Sigmoid colon (tissue), 7 donors: ENCODE measurements at regions of chr12 and their contacts with region 1.

Region 1: GRCh38 chr12:6778574-6779550 is 6.5 kb downstream of the LAG3 start:
- DNase-seq: peak; percentile 98
- H3K4me3 ChIP-seq: peak overlapping the region; percentile 12 to 50 (median 46)
- H3K27ac ChIP-seq: peak overlapping the region; percentile 84 to 89 (median 88)
- H3K4me1 ChIP-seq: peaks cover 0 to 28% (median 22%) of the 10 kb centered on the region in 4 donors
- H3K27me3 ChIP-seq: no peaks in the 10 kb centered on the region
- CTCF ChIP-seq: peak; percentile 93 to 99 (median 96)
- EP300 ChIP-seq: peak in 1 of 4 donors; percentile 47
- POLR2A ChIP-seq: no peak

Region 2: GRCh38 chr12:6613776-6614512 is 164.9 kb before region 1 on chr12:
- intact Hi-C with region 1: loop called (anchors 2 kb)
- DNase-seq: peak; percentile 98
- H3K4me3 ChIP-seq: peak overlapping the region in 1 of 4 donors; percentile 19
- H3K27ac ChIP-seq: peak overlapping the region; percentile 87 to 96 (median 94)
- H3K4me1 ChIP-seq: peaks cover 0 to 39% (median 36%) of the 10 kb centered on the region in 4 donors
- H3K27me3 ChIP-seq: no peaks in the 10 kb centered on the region
- CTCF ChIP-seq: no peak
- EP300 ChIP-seq: no peak
- POLR2A ChIP-seq: no peak

Region 3: GRCh38 chr12:6688999-6689882 is 89.6 kb before region 1 on chr12 and contains the start of gene ZNF384:
- intact Hi-C with region 1: loop called (anchors 5 kb)
- DNase-seq: peak; percentile 99
- H3K4me3 ChIP-seq: peak within 1 kb of the TSS; percentile 94 to 98 (median 96)
- H3K27ac ChIP-seq: peak within 1 kb of the TSS; percentile 98 to 100 (median 100)
- H3K4me1 ChIP-seq: peaks cover 0 to 40% (median 36%) of the 10 kb centered on the region in 4 donors
- H3K27me3 ChIP-seq: no peaks in the 10 kb centered on the region
- CTCF ChIP-seq: peak in 2 of 4 experiments; percentile 22 to 35
- EP300 ChIP-seq: peak in 2 of 4 donors; percentile 8 to 40
- POLR2A ChIP-seq: peak; percentile 30 to 47
- total RNA-seq, gene ZNF384: 24.0 to 32.6 (median 28.7) TPM

Region 4: GRCh38 chr12:6735448-6736191 is 43.2 kb before region 1 on chr12:
- intact Hi-C with region 1: loop called (anchors 1 kb)
- DNase-seq: peak; percentile 81
- H3K4me3 ChIP-seq: no peak overlapping the region
- H3K27ac ChIP-seq: peak overlapping the region; percentile 42 to 67 (median 60)
- H3K4me1 ChIP-seq: peaks cover 0 to 10% (median 5%) of the 10 kb centered on the region in 4 donors
- H3K27me3 ChIP-seq: no peaks in the 10 kb centered on the region
- CTCF ChIP-seq: peak; percentile 53 to 73 (median 71)
- EP300 ChIP-seq: no peak
- POLR2A ChIP-seq: no peak

Region 5: GRCh38 chr12:6752921-6753771 is 25.7 kb before region 1 on chr12 and contains the start of gene MLF2:
- intact Hi-C with region 1: loop called (anchors 1 kb)
- DNase-seq: peak; percentile 100
- H3K4me3 ChIP-seq: peak within 1 kb of the TSS; percentile 90 to 96 (median 91)
- H3K27ac ChIP-seq: peak within 1 kb of the TSS; percentile 98 to 99 (median 99)
- H3K4me1 ChIP-seq: peaks cover 0 to 24% (median 19%) of the 10 kb centered on the region in 4 donors
- H3K27me3 ChIP-seq: no peaks in the 10 kb centered on the region
- CTCF ChIP-seq: peak in 1 of 4 experiments; percentile 95
- EP300 ChIP-seq: peak in 1 of 4 donors; percentile 72
- POLR2A ChIP-seq: peak; percentile 96
- total RNA-seq, gene MLF2: 148 to 163 (median 159) TPM

Region 6: DNA sequence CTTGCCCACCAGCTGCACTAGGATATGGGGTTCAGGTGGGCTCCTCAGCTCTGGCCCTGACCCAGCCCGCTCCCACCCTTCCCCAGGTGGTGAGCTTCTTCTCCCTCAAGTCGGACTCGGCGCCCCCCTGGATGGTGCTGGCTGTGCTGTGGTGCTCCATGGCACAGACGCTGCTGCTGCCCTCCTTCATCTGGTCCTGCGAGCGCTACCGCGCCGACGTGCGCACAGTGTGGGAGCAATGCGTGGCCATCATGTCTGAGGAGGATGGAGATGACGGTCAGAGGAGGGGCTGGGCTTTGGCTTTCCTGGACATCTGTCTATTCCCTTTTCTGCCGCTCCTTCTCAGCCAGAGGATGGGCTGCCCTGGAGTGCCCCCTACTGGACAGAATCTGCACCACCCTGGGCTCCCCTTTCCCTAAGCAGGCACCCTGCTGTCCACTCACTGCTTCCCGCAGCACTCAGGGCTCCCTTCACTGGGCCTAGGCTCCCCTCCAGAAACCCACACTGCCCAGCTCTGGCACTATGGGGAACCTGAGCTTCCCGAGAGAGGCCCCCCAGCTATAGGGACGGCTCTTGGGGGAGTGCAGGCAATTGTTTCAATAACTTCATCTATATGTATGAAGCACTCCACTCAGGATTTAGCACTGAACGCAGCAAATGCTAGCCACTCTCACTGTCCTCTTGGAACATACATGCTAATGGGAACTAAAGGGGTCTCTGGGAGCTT is 46.7 kb after region 1 on chr12:
- intact Hi-C with region 1: loop called (anchors 2 kb)
- DNase-seq: peak; percentile 94
- H3K4me3 ChIP-seq: peak overlapping the region in 1 of 4 donors; percentile 18
- H3K27ac ChIP-seq: no peak overlapping the region
- H3K4me1 ChIP-seq: peaks cover 3 to 66% (median 49%) of the 10 kb centered on the region in 4 donors
- H3K27me3 ChIP-seq: no peaks in the 10 kb centered on the region
- CTCF ChIP-seq: peak; percentile 84 to 95 (median 92)
- EP300 ChIP-seq: no peak
- POLR2A ChIP-seq: no peak

Region 7: GRCh38 chr12:6836851-6837250 is 58.0 kb after region 1 on chr12:
- intact Hi-C with region 1: no loop called
- DNase-seq: no peak
- H3K4me3 ChIP-seq: no peak overlapping the region
- H3K27ac ChIP-seq: no peak overlapping the region
- H3K4me1 ChIP-seq: peaks cover 0 to 8% (median 4%) of the 10 kb centered on the region in 4 donors
- H3K27me3 ChIP-seq: no peaks in the 10 kb centered on the region
- CTCF ChIP-seq: no peak
- EP300 ChIP-seq: no peak
- POLR2A ChIP-seq: no peak

Region 8: GRCh38 chr12:7142056-7142644 is 363.3 kb after region 1 on chr12:
- intact Hi-C with region 1: no loop called
- DNase-seq: no peak
- H3K4me3 ChIP-seq: no peak overlapping the region
- H3K27ac ChIP-seq: no peak overlapping the region
- H3K4me1 ChIP-seq: no peaks in the 10 kb centered on the region
- H3K27me3 ChIP-seq: no peaks in the 10 kb centered on the region
- CTCF ChIP-seq: peak in 3 of 4 experiments; percentile 12 to 46 (median 38)
- EP300 ChIP-seq: no peak
- POLR2A ChIP-seq: no peak